Activated naive CD4-positive, alpha-beta T cell treated with anti-CD3 and anti-CD28 coated beads for 36 hours (primary cell): ENCODE measurements at regions of chr1 and their contacts with region 1.

Region 1: DNA sequence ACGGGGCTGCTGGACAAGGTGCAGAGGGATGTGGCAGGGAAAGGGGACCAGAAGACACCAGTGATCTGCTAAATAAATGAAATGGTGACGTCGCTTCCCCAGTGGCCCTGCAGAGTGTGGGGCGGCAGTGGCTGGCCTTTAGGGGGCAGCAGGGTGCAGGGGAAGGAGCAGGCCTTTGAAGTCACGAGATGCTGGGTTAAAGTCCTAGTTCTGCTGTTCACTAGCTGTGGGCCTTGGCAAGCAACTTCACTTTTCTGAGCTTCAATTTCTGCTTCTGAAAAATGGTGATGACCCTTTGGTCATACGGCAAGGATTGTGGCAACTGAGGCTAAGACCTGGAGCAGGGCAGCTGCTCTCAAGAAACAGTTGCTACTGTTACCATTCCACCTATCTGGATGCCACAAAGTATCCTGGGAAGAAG is 9.2 kb upstream of the GALE start:
- DNase-seq: peak; percentile 90
- H3K4me3 Mint-ChIP-seq: no peak overlapping the region
- H3K27ac Mint-ChIP-seq: no peak overlapping the region
- H3K4me1 Mint-ChIP-seq: peaks cover 10% of the 10 kb centered on the region
- H3K27me3 Mint-ChIP-seq: no peaks in the 10 kb centered on the region

Region 2: DNA sequence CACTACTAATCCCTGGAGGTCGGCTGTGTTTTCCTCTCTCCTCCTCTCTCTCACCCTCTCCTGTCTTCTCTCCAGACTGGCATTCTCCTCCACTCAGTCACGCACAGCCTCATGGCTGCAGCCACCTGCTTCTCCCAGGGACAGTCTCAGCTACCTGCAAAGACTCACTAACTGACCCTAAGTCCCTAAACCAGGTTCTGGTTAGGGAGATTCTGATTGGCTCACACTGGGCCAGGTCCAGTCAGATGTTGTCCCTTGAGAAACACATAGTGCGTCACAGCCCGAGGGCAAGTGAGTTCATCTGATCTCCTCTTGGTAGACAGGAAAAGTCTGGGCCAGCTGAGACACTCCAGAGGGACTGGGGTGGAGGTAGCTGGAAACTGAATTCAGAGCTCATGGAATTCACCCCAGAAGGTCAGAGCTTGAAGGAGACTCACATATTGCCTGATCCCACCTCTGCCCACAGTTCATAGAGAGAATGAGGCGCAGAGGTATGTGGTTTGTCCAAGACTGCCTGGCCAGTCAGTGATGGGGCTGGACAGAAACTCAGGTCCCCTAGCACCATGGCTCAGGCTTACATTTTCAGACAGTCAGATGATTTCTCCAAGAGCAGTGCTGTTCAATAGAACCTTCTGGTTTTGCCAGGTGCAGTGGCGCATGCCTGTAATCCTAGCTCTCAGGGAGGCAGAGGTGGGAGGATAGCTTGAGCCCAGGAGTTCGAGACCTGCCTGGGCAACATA is 158.5 kb before region 1 on chr1:
- CTCF ChIA-PET with region 1: no interaction called
- intact Hi-C with region 1: no loop called
- DNase-seq: no peak
- H3K4me3 Mint-ChIP-seq: no peak overlapping the region
- H3K27ac Mint-ChIP-seq: no peak overlapping the region
- H3K4me1 Mint-ChIP-seq: no peaks in the 10 kb centered on the region
- H3K27me3 Mint-ChIP-seq: no peaks in the 10 kb centered on the region

Region 3: GRCh38 chr1:23790696-23791515 is 18.9 kb before region 1 on chr1 and contains the start of gene LYPLA2:
- CTCF ChIA-PET with region 1: interaction called, 15 read pairs
- intact Hi-C with region 1: no loop called
- DNase-seq: peak; percentile 93
- H3K4me3 Mint-ChIP-seq: peak within 1 kb of the TSS; percentile 88
- H3K27ac Mint-ChIP-seq: peak within 1 kb of the TSS; percentile 89
- H3K4me1 Mint-ChIP-seq: peaks cover 25% of the 10 kb centered on the region
- H3K27me3 Mint-ChIP-seq: no peaks in the 10 kb centered on the region
- total RNA-seq, gene LYPLA2: 48.1 to 49.7 TPM

Region 4: GRCh38 chr1:23825076-23825761 is 15.5 kb after region 1 on chr1 and contains the start of gene HMGCL:
- CTCF ChIA-PET with region 1: interaction called, 48 read pairs
- intact Hi-C with region 1: no loop called
- DNase-seq: peak; percentile 92
- H3K4me3 Mint-ChIP-seq: peak within 1 kb of the TSS; percentile 91
- H3K27ac Mint-ChIP-seq: peak within 1 kb of the TSS; percentile 92
- H3K4me1 Mint-ChIP-seq: peaks cover 15% of the 10 kb centered on the region
- H3K27me3 Mint-ChIP-seq: no peaks in the 10 kb centered on the region
- total RNA-seq, gene HMGCL: 31.5 to 34.5 TPM

Region 5: GRCh38 chr1:23854568-23854967 is 44.8 kb after region 1 on chr1:
- CTCF ChIA-PET with region 1: interaction called, 7 read pairs
- intact Hi-C with region 1: loop called (anchors 1 kb)
- DNase-seq: peak; percentile 27
- H3K4me3 Mint-ChIP-seq: no peak overlapping the region
- H3K27ac Mint-ChIP-seq: no peak overlapping the region
- H3K4me1 Mint-ChIP-seq: no peaks in the 10 kb centered on the region
- H3K27me3 Mint-ChIP-seq: no peaks in the 10 kb centered on the region

Region 6: DNA sequence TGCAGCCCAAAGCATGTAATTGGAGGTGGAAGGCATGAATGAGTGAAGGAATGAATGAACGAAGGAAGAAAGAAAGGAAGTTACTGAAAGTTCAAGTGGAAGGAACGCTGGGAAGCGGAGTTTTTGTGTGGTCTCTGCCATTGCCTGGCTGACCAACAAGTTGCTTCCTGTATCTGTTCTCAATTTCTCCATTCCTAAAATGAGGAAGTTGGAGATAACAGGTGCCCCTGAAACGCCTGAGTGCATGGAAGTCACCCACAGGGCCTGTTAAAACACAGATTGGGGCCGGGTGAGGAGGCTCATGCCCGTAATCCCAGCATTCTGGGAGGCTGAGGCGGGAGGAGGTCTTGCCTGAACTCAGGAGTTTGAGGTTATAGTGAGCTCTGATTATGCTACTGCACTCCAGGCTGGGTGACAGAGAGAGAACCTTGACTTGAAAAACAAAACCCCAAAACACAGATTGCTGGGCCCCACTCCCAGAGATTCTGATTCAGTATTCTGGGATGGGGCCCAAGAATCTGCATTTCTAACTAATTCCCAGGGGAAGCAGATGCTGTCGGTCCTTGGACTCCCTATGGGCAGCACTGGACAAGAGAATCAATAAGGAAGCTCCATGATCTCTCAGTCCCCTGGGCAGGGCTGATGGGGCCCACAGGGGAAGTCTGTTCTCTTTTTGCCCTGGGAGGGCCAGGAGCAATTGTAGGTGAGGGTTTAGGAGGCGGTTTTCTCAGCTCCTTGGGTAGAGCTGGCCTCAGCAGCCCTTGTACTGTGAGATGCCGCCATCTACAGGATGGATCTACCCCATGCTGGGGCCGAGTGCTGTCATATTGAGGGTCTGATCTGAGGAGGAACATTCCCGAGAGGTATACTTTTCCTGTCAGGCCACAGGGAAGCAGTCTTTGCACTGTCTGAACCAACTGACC is 106.7 kb after region 1 on chr1:
- CTCF ChIA-PET with region 1: interaction called, 31 read pairs
- intact Hi-C with region 1: loop called (anchors 1 kb)
- DNase-seq: peak; percentile 76
- H3K4me3 Mint-ChIP-seq: no peak overlapping the region
- H3K27ac Mint-ChIP-seq: no peak overlapping the region
- H3K4me1 Mint-ChIP-seq: peaks cover 19% of the 10 kb centered on the region
- H3K27me3 Mint-ChIP-seq: no peaks in the 10 kb centered on the region

Region 7: GRCh38 chr1:24186993-24187805 is 377.4 kb after region 1 on chr1 and contains the start of gene IFNLR1:
- CTCF ChIA-PET with region 1: no interaction called
- intact Hi-C with region 1: no loop called
- DNase-seq: peak; percentile 92
- H3K4me3 Mint-ChIP-seq: peak within 1 kb of the TSS; percentile 79
- H3K27ac Mint-ChIP-seq: peak within 1 kb of the TSS; percentile 18
- H3K4me1 Mint-ChIP-seq: peaks cover 50% of the 10 kb centered on the region
- H3K27me3 Mint-ChIP-seq: peaks cover 3% of the 10 kb centered on the region
- total RNA-seq, gene IFNLR1: 4.3 to 4.6 TPM